Calu3 (cell line): ENCODE measurements at regions of chr5 and their contacts with region 1.

Region 1: DNA sequence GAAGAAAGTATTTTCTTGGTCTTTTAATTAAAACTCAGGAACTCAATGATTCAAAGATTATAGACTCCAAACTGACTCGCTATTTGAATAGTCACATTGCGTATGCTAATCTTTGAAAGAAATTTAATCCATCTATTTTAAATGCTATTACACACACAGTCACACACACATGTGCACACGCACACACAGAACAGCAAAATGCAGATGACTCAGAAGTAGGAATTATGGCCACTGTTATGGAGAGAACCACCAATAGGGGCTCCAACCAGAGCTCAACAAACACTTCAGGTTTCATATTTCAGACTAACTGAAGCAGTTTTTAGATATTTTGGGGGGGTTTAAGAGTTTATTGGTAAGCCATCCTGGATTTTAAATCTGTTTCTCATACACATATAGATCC is 1917.9 kb downstream of the EFNA5 start:
- DNase-seq: no peak
- H3K4me3 Mint-ChIP-seq: no peak overlapping the region
- H3K27ac Mint-ChIP-seq: no peak overlapping the region
- H3K4me1 Mint-ChIP-seq: peaks cover 7% of the 10 kb centered on the region
- H3K27me3 Mint-ChIP-seq: no peaks in the 10 kb centered on the region
- CTCF ChIP-seq: no peak

Region 2: DNA sequence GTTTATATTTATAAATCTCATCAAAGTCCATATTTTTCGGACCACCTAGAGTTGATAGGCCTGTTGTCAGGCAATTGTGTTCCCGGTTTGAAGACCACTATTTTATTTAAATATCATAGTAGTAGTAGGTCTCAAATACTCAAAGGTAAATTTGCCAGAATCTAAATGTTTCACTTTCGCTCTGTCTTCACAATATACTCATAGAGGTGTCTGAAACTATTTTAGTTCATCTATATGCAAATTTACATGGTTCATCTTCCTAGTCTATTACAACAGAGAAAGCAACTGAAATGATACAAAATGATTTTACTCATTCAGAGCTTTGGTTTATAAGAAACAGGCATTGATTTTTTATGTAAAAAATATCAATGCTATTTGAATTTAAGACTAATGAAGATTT is 20.4 kb after region 1 on chr5:
- CTCF ChIA-PET with region 1: interaction called, 13 read pairs
- intact Hi-C with region 1: no loop called
- DNase-seq: no peak
- H3K4me3 Mint-ChIP-seq: no peak overlapping the region
- H3K27ac Mint-ChIP-seq: no peak overlapping the region
- H3K4me1 Mint-ChIP-seq: peaks cover 39% of the 10 kb centered on the region
- H3K27me3 Mint-ChIP-seq: no peaks in the 10 kb centered on the region
- CTCF ChIP-seq: no peak